Activated CD8-positive, alpha-beta T cell treated with anti-CD3 and anti-CD28 coated beads, Interleukin-2, amount 10 ng/mL, durations not matched to agents 7 days and 5 days (primary cell): ENCODE measurements at regions of chr10 and their contacts with region 1.

Region 1: DNA sequence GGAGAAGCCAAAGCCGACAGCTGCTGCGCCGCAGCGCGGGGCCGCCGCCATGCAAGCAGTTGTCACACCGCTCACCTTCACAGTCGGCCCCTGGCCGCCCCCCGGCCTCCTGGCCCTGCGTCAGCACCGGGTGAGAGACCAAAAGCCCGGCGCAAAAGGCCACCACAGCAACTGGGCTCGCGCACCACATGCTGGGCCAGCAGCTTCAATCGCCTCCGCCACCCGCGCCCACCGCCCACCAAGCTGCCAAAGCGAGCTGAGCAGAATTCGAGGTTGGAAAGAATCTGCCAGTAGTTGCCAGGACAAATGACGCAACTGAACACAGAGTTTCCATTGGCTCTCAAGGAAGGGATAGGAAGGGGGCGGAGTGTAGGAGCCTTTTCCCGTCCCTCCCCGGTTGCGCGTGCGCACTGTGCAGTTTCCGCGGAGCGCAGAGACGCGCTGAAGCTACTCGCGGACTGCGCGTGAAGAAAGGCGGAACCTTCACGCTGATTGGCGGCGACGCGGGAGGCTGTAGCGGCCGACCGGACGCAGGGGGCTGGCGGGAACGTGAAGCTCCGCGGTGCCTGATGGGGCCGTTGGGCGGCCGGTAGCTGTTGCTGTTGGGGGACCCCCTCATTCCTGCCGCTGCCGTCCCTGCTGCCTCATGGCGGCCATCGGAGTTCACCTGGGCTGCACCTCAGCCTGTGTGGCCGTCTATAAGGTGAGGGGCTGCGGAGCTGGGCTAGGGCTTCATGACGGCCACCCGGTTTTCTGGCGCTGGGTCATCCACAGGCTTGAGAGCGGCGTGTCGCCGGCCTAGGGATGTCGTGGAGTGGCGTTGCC is at the starts of genes CDNF, HSPA14 and MSANTD7:
- DNase-seq: peak; percentile 100
- ATAC-seq: peak; percentile 94
- H3K4me3 Mint-ChIP-seq: peak within 1 kb of the TSS; percentile 90
- H3K27ac Mint-ChIP-seq: peak within 1 kb of the TSS; percentile 96
- H3K4me1 Mint-ChIP-seq: peaks cover 24% of the 10 kb centered on the region
- H3K27me3 Mint-ChIP-seq: no peaks in the 10 kb centered on the region
- total RNA-seq, gene CDNF: 0.89 to 1.2 TPM
- total RNA-seq, gene HSPA14: 28.9 to 31.4 TPM
- total RNA-seq, gene MSANTD7: 21.8 to 22.5 TPM

Region 2: DNA sequence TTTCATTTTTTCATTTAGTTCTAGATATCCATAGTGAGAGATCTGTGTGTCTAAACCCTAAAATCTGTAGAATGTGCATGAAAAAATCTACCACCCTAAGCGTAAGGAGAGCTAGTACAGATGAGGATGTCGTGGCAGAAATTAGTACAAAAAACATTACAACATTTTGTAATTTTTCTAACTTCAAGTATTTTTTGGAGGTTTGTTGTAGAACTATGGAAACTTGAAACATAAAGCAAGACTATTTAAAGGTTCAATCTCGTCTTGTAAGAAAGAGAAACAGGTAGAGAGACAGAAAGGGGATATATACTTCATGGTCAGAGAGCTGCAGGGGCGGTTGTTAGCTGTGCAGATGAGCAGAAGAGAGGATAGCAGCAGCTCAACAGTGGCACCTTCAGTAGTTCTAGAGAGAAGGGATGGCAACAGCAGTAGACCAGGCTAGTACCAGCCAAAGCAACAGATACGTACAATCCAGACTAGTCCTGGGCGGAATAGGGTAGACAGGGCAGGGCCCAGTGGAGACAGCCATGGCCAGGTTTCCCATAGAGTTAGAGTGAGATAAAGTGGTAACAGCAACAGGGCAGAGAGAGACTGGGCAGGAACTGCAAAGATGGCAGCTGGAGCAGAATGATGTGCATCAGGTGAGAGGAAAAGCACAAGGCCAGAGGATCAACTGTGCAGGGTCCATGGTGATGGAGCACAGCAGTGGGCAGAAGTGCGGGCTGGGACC is 652.5 kb before region 1 on chr10:
- CTCF ChIA-PET with region 1: no interaction called
- POLR2A ChIA-PET with region 1: interaction called, 12 read pairs
- DNase-seq: peak; percentile 64
- ATAC-seq: peak; percentile 91
- H3K4me3 Mint-ChIP-seq: peak overlapping the region; percentile 42
- H3K27ac Mint-ChIP-seq: peak overlapping the region; percentile 86
- H3K4me1 Mint-ChIP-seq: peaks cover 18% of the 10 kb centered on the region
- H3K27me3 Mint-ChIP-seq: peaks cover 37% of the 10 kb centered on the region

Region 3: DNA sequence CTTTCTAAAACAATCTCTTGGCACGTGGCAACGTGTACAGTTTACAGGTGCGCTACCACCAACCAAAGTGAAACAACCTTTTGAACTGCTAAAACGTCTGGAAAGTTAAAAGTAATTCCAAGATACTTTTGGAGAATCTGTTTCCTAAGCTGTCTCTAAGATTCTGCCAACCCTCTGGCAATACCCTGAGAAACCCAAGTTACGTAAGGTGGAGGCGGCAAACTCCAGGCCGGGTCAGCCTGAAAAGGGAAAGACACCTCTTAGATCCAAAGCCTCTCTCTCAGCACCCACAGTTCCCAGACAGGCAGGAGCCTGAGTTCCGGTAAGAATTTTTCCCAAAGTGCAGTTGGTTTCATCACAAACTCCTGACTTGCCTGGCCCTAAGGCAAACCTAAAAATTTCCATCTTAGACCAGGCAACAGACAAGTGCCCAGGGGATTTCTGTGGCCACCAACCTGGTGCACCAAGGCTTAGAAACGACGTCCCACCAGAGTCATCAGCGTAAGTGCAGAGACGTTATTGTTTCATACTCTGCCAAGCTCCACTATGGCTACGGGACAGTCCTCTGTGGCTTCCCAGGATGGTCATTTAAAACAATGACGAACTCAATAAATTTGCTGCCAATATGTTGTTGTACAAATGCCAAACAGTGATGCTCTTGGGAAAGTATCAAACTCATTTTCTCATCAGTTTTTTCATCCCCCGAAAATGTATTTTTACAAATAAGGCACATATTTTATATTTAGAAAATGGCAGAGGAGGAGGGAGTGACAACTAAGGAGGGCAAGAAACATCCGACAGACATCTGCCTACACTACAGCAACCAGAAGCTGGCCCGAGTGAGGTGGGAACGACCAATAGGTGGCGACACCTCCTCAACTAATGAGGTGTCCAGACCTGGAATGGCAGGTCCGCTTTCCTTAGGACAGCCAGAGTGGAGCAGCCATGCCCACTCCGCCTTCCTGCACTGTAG is 301.4 kb before region 1 on chr10:
- CTCF ChIA-PET with region 1: interaction called, 10 read pairs
- POLR2A ChIA-PET with region 1: no interaction called
- DNase-seq: peak; percentile 56
- ATAC-seq: peak; percentile 62
- H3K4me3 Mint-ChIP-seq: no peak overlapping the region
- H3K27ac Mint-ChIP-seq: no peak overlapping the region
- H3K4me1 Mint-ChIP-seq: peaks cover 67% of the 10 kb centered on the region
- H3K27me3 Mint-ChIP-seq: no peaks in the 10 kb centered on the region

Region 4: DNA sequence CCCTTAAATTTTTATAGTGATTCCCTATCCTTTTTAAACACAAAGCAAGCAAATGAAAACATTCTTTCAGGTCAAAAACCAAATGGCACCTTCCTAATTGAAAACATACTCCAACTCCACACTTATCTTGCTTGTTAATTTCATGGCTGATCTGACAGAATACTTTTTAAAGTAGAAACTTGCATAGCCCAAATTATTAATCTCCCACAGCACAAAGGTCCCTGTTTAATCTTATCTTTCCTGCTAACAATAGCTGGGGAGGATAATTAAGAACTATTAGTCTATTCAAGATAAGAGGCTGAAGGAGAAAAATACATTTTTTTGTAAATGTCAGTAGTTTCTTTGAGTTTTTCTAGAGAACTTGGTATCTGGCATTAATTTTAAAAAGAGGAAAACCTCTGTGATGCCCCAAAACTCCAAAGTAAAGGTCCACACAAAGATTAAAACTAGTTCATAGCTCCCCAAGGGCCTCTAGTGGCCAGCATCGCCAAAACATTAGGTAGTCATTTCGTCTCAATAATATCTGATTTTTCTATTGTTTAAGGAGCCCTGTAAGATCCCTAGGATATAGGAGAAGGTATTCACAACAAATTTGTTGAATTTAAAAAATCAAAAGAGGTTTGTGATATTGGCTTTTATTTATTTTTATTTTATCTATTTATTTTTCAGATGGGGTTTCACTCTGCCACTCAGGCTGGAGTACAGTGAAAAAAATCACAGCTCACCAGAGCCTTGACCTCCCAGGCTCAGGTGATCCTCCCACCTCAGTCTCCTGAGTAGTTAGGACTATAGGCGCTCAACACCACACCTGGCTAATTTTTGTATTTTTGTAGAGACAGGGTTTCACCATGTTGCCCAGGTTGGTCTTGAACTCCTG is 14.9 kb before region 1 on chr10:
- CTCF ChIA-PET with region 1: interaction called, 32 read pairs
- POLR2A ChIA-PET with region 1: interaction called, 5 read pairs
- DNase-seq: peak; percentile 61
- ATAC-seq: no peak
- H3K4me3 Mint-ChIP-seq: no peak overlapping the region
- H3K27ac Mint-ChIP-seq: no peak overlapping the region
- H3K4me1 Mint-ChIP-seq: peaks cover 8% of the 10 kb centered on the region
- H3K27me3 Mint-ChIP-seq: peaks cover 13% of the 10 kb centered on the region

Region 5: DNA sequence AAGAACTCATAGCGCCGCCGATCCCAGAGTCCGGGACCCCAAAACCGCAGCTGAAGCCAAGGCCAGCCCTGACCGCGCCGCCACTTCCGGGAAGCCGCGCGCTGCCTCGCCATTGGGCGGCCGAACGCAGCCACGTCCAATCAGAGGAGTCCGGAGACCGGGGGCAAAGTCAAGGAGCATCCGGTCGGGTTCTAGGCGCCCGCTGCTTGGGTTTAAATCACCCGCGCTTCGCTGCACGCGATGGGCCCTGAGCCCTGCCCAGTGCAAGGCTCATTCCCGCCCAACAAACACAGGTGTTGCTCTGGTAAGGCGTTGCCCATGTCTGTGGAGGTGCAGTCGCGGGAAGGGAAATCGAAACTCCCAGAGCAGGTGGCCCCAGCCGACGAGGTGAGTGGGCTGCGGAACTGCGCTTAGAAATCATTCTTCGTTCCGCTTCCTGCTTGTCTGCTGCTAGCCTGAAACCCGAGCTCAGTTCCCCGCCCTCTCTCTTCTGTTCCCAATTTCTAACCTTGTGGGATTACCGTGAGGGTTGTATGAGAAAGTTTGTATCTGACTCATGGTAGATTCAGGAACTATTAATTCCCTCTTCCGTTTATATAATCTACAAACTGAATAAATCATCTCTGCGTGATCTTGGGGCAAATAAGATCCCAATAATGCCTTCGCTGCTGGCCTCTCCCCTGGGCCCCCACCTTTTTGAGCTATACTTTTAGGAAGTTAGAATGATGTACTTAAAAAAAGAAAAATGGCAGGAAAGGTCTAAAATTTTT is 116.2 kb after region 1 on chr10 and contains the start of gene DCLRE1C:
- CTCF ChIA-PET with region 1: interaction called, 4 read pairs
- POLR2A ChIA-PET with region 1: interaction called, 12 read pairs
- DNase-seq: peak; percentile 96
- ATAC-seq: peak; percentile 96
- H3K4me3 Mint-ChIP-seq: peak within 1 kb of the TSS; percentile 94
- H3K27ac Mint-ChIP-seq: peak within 1 kb of the TSS; percentile 96
- H3K4me1 Mint-ChIP-seq: peaks cover 70% of the 10 kb centered on the region
- H3K27me3 Mint-ChIP-seq: no peaks in the 10 kb centered on the region
- total RNA-seq, gene DCLRE1C: 50.7 to 58.3 TPM